Mammary epithelial cell (primary cell): ENCODE measurements at regions of chr3 and their contacts with region 1.

Region 1: DNA sequence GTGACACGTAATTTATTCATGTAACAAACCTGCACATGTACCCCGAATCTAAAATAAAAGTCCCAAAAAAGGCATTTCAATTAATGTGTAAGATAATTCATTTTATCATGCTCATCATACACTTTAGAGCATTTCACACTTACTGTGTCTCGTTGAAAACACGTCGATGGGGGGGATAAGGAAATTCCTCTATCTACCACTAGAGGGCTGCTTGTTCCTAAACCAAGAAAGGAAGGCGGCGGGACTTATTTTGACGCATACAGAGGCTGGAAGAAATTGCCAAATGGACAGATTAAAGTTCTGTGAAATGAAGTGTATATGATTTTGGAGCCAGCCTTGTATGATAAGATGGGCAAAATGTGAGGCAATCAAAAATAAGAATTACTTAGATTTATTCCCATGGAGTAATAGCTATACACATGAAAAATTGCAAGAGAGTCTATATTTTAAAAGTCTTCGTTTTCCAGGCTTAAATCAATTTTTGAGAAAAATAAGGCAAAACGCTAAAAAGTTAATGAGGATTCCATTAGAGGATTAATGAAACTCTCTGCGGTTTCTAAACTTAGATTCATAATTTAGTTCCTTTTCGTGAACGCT is 346.8 kb downstream of the CNTN3 start:
- DNase-seq: peak; percentile 46
- H3K4me3 ChIP-seq: no peak overlapping the region
- H3K27ac ChIP-seq: no peak overlapping the region
- H3K4me1 ChIP-seq: peaks cover 16% of the 10 kb centered on the region
- H3K27me3 ChIP-seq: no peaks in the 10 kb centered on the region
- CTCF ChIP-seq: peak; percentile 77 to 84

Region 2: GRCh38 chr3:73868688-73869315 is 398.9 kb before region 1 on chr3:
- CTCF ChIA-PET with region 1: no interaction called
- dilution Hi-C with region 1: no loop called
- in situ Hi-C with region 1: no loop called
- intact Hi-C with region 1: no loop called
- DNase-seq: peak; percentile 23
- H3K4me3 ChIP-seq: no peak overlapping the region
- H3K27ac ChIP-seq: no peak overlapping the region
- H3K4me1 ChIP-seq: no peaks in the 10 kb centered on the region
- H3K27me3 ChIP-seq: no peaks in the 10 kb centered on the region
- CTCF ChIP-seq: peak; percentile 40 to 63

Region 3: DNA sequence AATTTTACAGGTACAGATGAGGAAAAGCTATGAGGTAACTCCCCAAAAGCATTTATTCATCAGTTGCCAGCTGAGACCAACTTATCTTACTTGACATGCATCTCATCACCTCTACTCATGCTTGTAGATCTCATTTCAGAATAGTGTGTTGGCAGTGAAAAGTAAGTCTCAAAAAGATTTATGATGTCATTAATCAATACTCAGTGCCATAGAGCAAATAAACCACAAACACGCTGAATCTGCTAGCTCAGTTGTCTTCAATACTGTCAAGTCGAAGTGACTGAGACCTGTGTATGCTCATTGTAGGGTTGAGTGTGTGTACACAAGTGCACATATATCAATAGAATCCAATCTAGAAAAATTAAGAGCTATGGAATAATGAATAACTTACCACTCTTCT is 66.7 kb before region 1 on chr3:
- CTCF ChIA-PET with region 1: no interaction called
- dilution Hi-C with region 1: no loop called
- in situ Hi-C with region 1: no loop called
- intact Hi-C with region 1: no loop called
- DNase-seq: no peak
- H3K4me3 ChIP-seq: no peak overlapping the region
- H3K27ac ChIP-seq: no peak overlapping the region
- H3K4me1 ChIP-seq: no peaks in the 10 kb centered on the region
- H3K27me3 ChIP-seq: peaks cover 4% of the 10 kb centered on the region
- CTCF ChIP-seq: no peak

Region 4: GRCh38 chr3:74375653-74376052 is 108.0 kb after region 1 on chr3:
- CTCF ChIA-PET with region 1: no interaction called
- dilution Hi-C with region 1: no loop called
- in situ Hi-C with region 1: no loop called
- intact Hi-C with region 1: no loop called
- DNase-seq: no peak
- H3K4me3 ChIP-seq: no peak overlapping the region
- H3K27ac ChIP-seq: no peak overlapping the region
- H3K4me1 ChIP-seq: no peaks in the 10 kb centered on the region
- H3K27me3 ChIP-seq: no peaks in the 10 kb centered on the region
- CTCF ChIP-seq: no peak

Region 5: GRCh38 chr3:74456166-74456565 is 188.5 kb after region 1 on chr3:
- CTCF ChIA-PET with region 1: no interaction called
- dilution Hi-C with region 1: no loop called
- in situ Hi-C with region 1: no loop called
- intact Hi-C with region 1: no loop called
- DNase-seq: no peak
- H3K4me3 ChIP-seq: no peak overlapping the region
- H3K27ac ChIP-seq: no peak overlapping the region
- H3K4me1 ChIP-seq: no peaks in the 10 kb centered on the region
- H3K27me3 ChIP-seq: no peaks in the 10 kb centered on the region
- CTCF ChIP-seq: no peak

Region 6: DNA sequence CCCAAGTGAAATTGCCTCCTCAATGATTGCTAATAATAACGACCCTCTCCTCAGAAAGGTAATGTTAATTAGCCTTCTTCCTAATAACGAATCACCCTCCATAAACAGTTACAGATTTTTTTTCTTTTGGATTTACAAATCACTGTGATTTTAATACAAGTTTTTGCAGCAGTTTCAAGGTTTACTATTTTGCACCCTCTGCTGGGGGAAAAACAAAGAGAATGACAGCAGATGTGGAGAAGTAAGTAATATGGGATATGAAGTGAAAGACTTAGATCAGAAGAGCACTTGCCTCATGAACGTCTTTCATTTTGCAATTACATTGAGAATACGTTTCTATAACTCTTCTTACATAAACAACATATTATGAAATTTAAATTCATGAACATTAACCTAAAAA is 362.9 kb after region 1 on chr3:
- CTCF ChIA-PET with region 1: no interaction called
- dilution Hi-C with region 1: no loop called
- in situ Hi-C with region 1: no loop called
- intact Hi-C with region 1: loop called (anchors 1 kb)
- DNase-seq: peak; percentile 46
- H3K4me3 ChIP-seq: no peak overlapping the region
- H3K27ac ChIP-seq: no peak overlapping the region
- H3K4me1 ChIP-seq: peaks cover 6% of the 10 kb centered on the region
- H3K27me3 ChIP-seq: no peaks in the 10 kb centered on the region
- CTCF ChIP-seq: peak; percentile 27 to 57

Region 7: DNA sequence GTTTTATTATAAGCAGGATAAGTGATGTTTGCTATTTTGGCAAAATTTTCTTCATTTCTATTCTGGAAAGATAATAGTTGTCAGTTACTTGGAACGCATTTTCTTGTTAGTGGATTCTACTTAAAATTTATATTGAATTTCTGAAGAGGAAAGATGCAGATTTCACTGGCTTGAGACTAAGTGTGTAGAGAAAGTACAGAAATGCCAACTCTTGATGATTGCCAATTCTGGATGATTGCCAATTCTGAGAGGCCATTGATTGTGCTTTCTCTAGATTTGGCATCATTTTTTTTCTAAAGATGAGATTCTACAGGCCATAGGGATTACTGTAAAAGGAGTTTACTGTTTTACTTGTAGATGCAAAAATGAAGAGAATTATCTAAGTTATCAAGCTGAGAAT is 405.6 kb after region 1 on chr3:
- CTCF ChIA-PET with region 1: no interaction called
- dilution Hi-C with region 1: no loop called
- in situ Hi-C with region 1: no loop called
- intact Hi-C with region 1: loop called (anchors 5 kb)
- DNase-seq: no peak
- H3K4me3 ChIP-seq: no peak overlapping the region
- H3K27ac ChIP-seq: no peak overlapping the region
- H3K4me1 ChIP-seq: no peaks in the 10 kb centered on the region
- H3K27me3 ChIP-seq: no peaks in the 10 kb centered on the region
- CTCF ChIP-seq: no peak

Region 8: DNA sequence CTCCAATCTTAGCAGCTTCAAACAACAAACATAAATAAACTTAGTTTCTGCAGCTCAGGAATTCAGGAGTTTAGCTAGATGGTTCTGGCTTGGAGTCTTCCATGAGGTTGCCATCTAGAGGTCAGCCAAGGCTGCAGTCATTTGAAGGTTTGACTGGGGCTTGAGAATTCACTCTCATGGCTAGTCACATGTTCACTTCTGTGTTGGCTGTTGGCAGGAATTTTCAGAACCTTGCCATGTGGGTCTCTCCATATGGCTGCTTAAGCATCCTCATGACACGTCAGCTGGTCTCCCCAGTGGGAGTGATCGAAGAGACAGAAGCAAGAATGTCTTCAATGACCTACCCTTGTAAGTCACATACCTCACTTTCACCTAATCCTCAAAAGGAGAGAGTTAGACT is 616.0 kb after region 1 on chr3:
- CTCF ChIA-PET with region 1: no interaction called
- dilution Hi-C with region 1: no loop called
- in situ Hi-C with region 1: no loop called
- intact Hi-C with region 1: loop called (anchors 10 kb)
- DNase-seq: peak; percentile 31
- H3K4me3 ChIP-seq: no peak overlapping the region
- H3K27ac ChIP-seq: no peak overlapping the region
- H3K4me1 ChIP-seq: no peaks in the 10 kb centered on the region
- H3K27me3 ChIP-seq: no peaks in the 10 kb centered on the region
- CTCF ChIP-seq: peak; percentile 64 to 80

Region 9: GRCh38 chr3:75001330-75001729 is 733.6 kb after region 1 on chr3:
- CTCF ChIA-PET with region 1: no interaction called
- dilution Hi-C with region 1: no loop called
- in situ Hi-C with region 1: no loop called
- intact Hi-C with region 1: loop called (anchors 5 kb)
- DNase-seq: peak; percentile 5
- H3K4me3 ChIP-seq: no peak overlapping the region
- H3K27ac ChIP-seq: no peak overlapping the region
- H3K4me1 ChIP-seq: no peaks in the 10 kb centered on the region
- H3K27me3 ChIP-seq: no peaks in the 10 kb centered on the region
- CTCF ChIP-seq: peak; percentile 57 to 60